GM13977 (cell line): ENCODE measurements at regions of chr1 and their contacts with region 1.

Region 1: DNA sequence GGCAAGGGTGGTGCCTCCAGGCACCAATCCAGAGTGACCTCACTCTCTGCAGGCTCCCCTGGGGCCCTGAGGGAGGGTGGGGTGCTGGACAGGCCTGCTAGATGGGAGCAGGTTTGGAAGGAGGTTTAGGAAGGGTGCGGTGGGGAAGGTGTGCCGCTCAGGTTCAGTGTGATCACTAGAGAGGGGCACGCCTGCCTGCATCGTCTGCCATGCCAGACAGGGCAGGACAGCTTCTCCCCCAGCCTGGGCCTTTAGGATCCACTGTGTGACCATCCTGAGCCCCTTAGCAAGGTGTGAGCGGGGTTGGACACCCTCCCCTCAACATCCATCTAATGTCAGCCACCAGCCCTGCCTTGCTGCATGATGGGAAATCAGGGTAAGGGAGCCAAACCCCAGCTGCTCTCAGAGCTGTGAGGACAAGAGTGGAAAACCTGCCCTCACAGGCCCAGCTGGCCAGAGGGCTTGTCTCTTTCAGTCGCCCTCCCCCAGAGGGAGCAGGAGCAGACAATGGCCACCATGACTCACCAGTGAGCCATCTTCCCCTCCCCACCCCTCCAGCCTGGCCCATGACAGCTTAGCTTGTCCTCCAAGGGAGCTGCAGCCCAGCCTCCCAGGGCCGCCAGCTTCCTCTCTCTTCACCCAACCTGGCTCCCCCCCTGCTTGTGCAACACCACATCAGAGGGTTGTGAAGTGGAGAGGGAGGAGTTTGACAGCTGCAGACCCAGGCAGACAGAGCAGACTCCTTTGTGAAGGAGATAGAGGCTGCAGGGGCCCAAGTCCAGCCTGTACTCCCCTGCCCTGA is 37.0 kb downstream of the NUAK2 start:
- DNase-seq: peak; percentile 65
- CTCF ChIP-seq: no peak

Region 2: GRCh38 chr1:205321164-205321958 is 36.8 kb after region 1 on chr1 and contains the start of gene NUAK2:
- in situ Hi-C with region 1: loop called (anchors 5 kb)
- DNase-seq: peak; percentile 72
- CTCF ChIP-seq: peak; percentile 30

Region 3: GRCh38 chr1:205536759-205537361 is 252.3 kb after region 1 on chr1:
- in situ Hi-C with region 1: no loop called
- DNase-seq: no peak
- CTCF ChIP-seq: no peak